HAP-1 (cell line): ENCODE measurements at regions of chr13 and their contacts with region 1.

Region 1: DNA sequence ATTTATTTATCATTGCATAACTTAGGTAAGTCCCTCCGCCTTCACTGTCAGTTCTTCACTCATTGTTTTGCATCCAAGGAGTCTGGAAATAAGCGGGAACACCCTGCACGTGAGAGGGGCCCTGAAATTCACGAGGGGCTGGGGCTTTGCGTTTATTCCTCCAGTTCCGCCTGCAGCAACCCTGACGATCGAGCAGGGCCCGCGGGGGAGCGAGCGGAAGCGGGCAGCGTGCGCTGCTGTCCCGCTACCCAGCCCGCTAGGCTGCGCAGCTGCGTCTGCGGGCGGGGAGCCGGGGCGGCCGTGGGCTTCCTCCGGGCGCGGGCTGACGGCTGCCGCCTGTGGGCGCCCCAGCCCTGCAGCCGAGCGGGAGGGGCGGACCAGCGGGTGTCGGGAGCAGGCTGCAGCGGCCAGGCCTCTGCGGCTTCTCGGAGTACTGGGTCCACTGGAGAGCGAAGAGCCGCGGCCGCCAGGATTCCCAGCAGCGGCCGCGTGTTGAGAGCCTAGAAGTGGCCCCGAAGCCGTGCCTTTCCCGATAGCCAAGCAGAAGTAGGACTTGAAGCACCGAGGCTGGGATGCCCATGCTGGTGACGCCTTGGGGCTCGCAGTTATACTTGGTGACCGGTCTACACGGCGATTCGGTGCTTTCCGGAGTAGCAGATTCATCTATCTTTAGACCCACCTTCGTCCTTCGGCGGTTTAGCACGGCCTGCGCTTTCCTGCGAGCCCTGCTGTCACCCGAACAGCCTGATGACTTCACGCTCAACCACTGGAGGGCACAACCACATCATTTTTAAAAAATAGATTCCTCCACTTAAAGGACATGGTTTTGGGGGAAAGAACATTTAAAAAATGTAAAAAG is 32.9 kb upstream of the SACS start:
- DNase-seq: peak; percentile 80 to 82
- H3K4me3 ChIP-seq: peak overlapping the region; percentile 31
- H3K4me1 ChIP-seq: peaks cover 21% of the 10 kb centered on the region
- H3K27me3 ChIP-seq: 0 out of 2 replicates have a peak, but pooled peaks cover 4% of the 10 kb centered on the region

Region 2: GRCh38 chr13:23579072-23579895 is 112.9 kb after region 1 on chr13:
- in situ Hi-C with region 1: loop called (anchors 5 kb)
- DNase-seq: peak; percentile 74 to 95
- H3K4me3 ChIP-seq: peak overlapping the region; percentile 69
- H3K4me1 ChIP-seq: peaks cover 9% of the 10 kb centered on the region; the same call in 1 of the 2 replicates
- H3K27me3 ChIP-seq: no peaks in the 10 kb centered on the region

Region 3: DNA sequence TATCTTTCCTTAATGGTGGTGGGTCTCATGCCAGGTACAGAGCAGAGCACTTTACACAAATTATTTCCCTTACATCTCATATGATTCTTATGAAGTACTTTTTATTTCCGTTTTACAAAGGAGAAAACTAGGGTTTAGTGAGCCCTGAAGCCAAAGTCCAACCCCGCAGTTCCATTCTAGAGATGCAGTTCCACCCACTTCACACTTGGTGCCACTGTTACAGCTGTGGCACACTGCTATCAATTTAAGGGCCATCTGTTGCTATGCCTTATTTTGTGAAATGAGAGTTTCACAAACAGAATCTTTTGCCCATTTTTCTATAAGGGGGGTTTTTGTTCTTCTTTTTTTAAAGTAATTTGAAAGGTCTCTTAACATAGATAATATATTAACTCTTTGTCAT is 409.9 kb after region 1 on chr13:
- in situ Hi-C with region 1: loop called (anchors 5 kb)
- DNase-seq: no peak
- H3K4me3 ChIP-seq: no peak overlapping the region
- H3K4me1 ChIP-seq: no peaks in the 10 kb centered on the region
- H3K27me3 ChIP-seq: no peaks in the 10 kb centered on the region